HepG2 (cell line): ENCODE measurements at regions of chr1 and their contacts with region 1.

Region 1: GRCh38 chr1:208025031-208025430 is 114.1 kb upstream of the CD34 start:
- DNase-seq: no peak
- ATAC-seq: no peak
- H3K4me3 ChIP-seq: no peak overlapping the region
- H3K27ac ChIP-seq: no peak overlapping the region
- H3K4me1 ChIP-seq: no peaks in the 10 kb centered on the region
- H3K27me3 ChIP-seq: peaks cover 0 to 3% of the 10 kb centered on the region in 2 experiments; a peak in 1 of 5 replicates
- CTCF ChIP-seq: no peak
- EP300 ChIP-seq: no peak
- POLR2A ChIP-seq: no peak
- RAD21 ChIP-seq: no peak

Region 2: DNA sequence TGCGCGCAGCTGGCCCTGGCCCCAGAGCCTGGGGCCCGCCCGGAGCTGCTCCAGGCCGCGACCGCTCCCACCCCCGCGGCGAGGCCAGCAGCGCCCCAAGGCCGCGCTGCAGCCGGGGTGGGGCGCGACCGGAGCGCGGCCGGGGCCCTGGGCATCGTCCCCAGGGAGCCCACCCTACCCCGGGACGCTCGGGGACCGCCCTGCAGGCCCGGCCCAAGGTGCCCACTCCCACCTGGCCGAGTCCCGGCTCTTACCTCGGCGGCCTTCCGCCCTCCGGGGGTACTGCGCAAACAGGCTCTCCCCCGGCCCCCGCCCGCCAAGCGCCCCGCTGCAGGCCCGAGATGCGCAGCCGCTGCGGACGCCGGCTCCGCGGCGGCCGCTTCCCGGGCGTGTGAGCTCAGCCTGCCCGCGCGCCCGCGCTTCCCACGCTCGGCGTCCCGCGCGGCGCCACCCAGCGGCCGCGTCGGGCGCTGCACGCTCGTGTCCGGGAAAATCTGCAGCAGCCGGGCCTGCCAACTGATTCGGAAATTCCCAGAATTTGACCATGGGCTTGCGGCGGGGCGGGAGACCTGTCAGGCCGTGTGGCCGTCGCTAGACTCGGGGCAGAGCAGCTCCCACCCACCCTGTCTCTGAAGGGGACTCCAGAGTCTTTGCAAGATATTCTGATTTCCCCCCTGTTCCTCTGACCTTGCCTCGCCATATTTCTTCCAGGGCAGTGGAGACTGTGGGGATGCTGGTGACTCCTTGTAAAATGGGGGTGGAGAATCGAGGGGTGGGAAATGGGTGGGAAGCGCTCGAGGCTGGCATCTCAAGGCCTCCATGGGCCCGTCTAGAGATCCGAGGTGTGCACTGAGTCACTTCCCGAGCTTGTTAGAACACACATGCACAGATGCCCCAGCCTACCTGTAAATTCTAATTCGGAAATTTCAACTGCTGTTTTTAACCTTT is 156.0 kb before region 1 on chr1:
- CTCF ChIA-PET with region 1: no interaction called
- POLR2A ChIA-PET with region 1: no interaction called
- in situ Hi-C with region 1: no loop called
- intact Hi-C with region 1: no loop called
- DNase-seq: peak; percentile 41
- ATAC-seq: peak; percentile 91
- H3K4me3 ChIP-seq: peak overlapping the region; percentile 61 to 83 (median 82)
- H3K27ac ChIP-seq: no peak overlapping the region
- H3K4me1 ChIP-seq: peaks cover 37% of the 10 kb centered on the region
- H3K27me3 ChIP-seq: peaks cover 0 to 17% of the 10 kb centered on the region in 2 experiments; a peak in 2 of 5 replicates
- CTCF ChIP-seq: peak; percentile 76
- EP300 ChIP-seq: peak in 1 of 2 experiments; percentile 35; a peak in 1 of 4 replicates
- POLR2A ChIP-seq: no peak
- RAD21 ChIP-seq: peak; percentile 88

Region 3: GRCh38 chr1:208036109-208036808 is 11.2 kb after region 1 on chr1:
- CTCF ChIA-PET with region 1: no interaction called
- POLR2A ChIA-PET with region 1: no interaction called
- in situ Hi-C with region 1: no loop called
- intact Hi-C with region 1: no loop called
- DNase-seq: peak; percentile 30
- ATAC-seq: peak; percentile 38; the same call in 1 of the 3 replicates
- H3K4me3 ChIP-seq: no peak overlapping the region
- H3K27ac ChIP-seq: no peak overlapping the region
- H3K4me1 ChIP-seq: no peaks in the 10 kb centered on the region
- H3K27me3 ChIP-seq: no peaks in the 10 kb centered on the region
- CTCF ChIP-seq: peak; percentile 57
- EP300 ChIP-seq: no peak
- POLR2A ChIP-seq: no peak
- RAD21 ChIP-seq: no peak

Region 4: DNA sequence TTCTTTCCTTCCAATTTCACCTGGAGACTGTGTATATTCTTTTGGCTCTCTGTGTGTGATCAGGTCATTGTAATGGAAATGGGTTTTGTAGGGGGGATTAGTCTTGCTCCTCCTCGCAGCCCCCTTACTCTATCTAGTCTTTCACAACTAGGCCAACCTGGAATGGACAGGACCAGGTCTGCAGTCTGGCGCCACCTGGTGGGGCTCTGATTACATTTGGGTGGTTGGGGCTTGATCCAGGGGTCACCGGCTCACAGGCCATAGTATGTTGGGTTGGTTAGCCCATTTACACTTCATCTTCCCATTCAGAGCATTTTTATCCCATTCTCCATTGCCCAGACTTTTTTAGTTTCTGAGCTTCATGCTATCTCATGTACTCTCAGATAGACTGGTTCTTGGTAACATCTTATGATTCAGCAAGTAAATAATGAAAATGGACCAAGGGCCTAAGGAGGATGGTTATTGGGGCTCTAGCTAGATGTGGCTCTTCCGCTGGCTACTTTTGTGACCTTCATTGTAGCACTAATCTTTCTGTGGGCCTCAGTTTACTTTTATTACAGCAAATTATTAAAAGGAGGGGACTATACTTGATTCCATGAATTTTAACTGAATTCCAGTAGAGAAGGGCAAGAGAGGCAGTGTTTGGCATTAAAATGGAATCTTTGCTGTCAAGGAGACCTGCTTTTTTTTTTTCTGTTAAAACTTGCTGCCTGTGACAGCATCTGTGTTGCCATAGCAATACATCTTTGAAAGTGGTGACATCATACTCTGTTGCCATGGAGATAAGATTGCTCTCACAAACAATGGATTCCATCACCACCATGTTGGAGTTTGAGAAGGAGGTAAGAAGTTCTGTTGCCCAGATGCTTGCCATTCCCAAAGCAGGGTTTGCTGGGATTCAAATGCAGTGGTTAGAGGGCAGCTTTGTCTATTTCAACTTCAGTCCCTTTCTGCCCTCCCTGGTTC is 69.0 kb after region 1 on chr1:
- CTCF ChIA-PET with region 1: interaction called, 4 read pairs
- POLR2A ChIA-PET with region 1: no interaction called
- in situ Hi-C with region 1: no loop called
- intact Hi-C with region 1: loop called (anchors 1 kb)
- DNase-seq: peak; percentile 50
- ATAC-seq: peak; percentile 94
- H3K4me3 ChIP-seq: no peak overlapping the region
- H3K27ac ChIP-seq: no peak overlapping the region
- H3K4me1 ChIP-seq: no peaks in the 10 kb centered on the region
- H3K27me3 ChIP-seq: no peaks in the 10 kb centered on the region
- CTCF ChIP-seq: peak; percentile 85
- EP300 ChIP-seq: no peak
- POLR2A ChIP-seq: no peak
- RAD21 ChIP-seq: 0 out of 2 replicates have a peak, but pooled peaks have one; percentile 38

Region 5: GRCh38 chr1:208245185-208245705 is 220.2 kb after region 1 on chr1:
- CTCF ChIA-PET with region 1: interaction called, 24 read pairs
- POLR2A ChIA-PET with region 1: interaction called, 3 read pairs
- in situ Hi-C with region 1: loop called (anchors 5 kb)
- intact Hi-C with region 1: loop called (anchors 1 kb)
- DNase-seq: peak; percentile 85
- ATAC-seq: peak; percentile 75
- H3K4me3 ChIP-seq: peak overlapping the region; percentile 52 to 81 (median 65); a peak in 5 of 6 replicates
- H3K27ac ChIP-seq: no peak overlapping the region
- H3K4me1 ChIP-seq: peaks cover 56% of the 10 kb centered on the region
- H3K27me3 ChIP-seq: peaks cover 0 to 25% of the 10 kb centered on the region in 2 experiments; a peak in 2 of 5 replicates
- CTCF ChIP-seq: peak; percentile 89
- EP300 ChIP-seq: no peak
- POLR2A ChIP-seq: no peak
- RAD21 ChIP-seq: peak; percentile 75